ENCODE measurements at regions of chr2 and their contacts with region 1.

Region 1: DNA sequence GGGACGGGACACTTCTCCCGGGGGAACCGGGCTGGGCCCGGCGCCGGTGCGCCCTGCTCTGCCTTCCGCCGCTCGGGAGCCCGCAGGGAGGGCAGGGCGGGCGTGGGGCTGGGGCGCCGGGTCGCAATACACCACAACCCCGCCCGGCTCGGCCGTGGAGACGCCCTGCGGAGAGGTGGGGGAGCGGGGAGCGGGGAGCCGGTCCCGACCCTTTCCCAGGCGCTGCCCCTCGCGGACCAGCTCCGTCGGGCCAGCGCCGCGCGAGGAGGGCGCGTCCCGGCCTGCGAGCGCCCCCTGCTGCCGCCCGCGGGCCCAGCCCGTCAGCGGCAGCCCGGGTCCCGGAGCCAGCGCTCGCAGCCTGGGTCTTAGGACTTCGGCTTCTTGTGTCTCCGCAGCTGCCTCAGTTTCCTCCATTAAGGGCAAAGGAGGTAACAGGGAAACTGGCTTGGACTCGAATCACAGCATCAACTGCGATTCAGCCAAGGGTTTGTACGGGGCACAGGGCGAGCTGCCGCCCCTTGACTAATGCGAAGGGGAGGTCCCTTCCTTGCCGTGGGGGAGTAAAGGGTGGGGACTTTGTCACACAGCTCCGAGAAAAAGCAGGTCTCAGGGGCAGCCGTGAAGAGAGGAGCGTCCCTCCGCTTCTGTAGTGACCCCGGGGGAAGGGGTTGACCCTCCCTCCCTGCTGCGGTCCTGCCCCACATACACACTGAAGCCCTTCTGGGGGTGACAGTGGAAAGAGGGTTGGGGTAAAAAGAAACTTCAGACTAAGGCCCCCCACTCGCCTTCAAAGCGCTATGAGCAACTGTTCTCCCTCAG is 717 bp upstream of the ADRA2B start:
- DNase-seq: peak; percentile 59 to 78 (median 68)
- H3K4me3 ChIP-seq: peak overlapping the region in 1 of 2 donors; percentile 55
- H3K4me3 Mint-ChIP-seq: peak overlapping the region; percentile 35 to 85 (median 55)
- H3K27ac ChIP-seq: no peak overlapping the region
- H3K27ac Mint-ChIP-seq: peak overlapping the region in 2 of 7 donors; percentile 12 to 81
- H3K4me1 ChIP-seq: peaks cover 6% of the 10 kb centered on the region
- H3K4me1 Mint-ChIP-seq: peaks cover 3 to 32% (median 13%) of the 10 kb centered on the region in 4 donors
- H3K27me3 ChIP-seq: no peaks in the 10 kb centered on the region
- H3K27me3 Mint-ChIP-seq: peaks cover 26 to 29% of the 10 kb centered on the region in 2 donors

Region 2: GRCh38 chr2:96024336-96025193 is 92.5 kb before region 1 on chr2:
- CTCF ChIA-PET with region 1: interaction called, 11 read pairs
- POLR2A ChIA-PET with region 1: interaction called, 3 read pairs
- intact Hi-C with region 1: loop called (anchors 10 kb)
- DNase-seq: no peak
- H3K4me3 ChIP-seq: no peak overlapping the region
- H3K4me3 Mint-ChIP-seq: no peak overlapping the region
- H3K27ac ChIP-seq: no peak overlapping the region
- H3K27ac Mint-ChIP-seq: no peak overlapping the region
- H3K4me1 ChIP-seq: no peaks in the 10 kb centered on the region
- H3K4me1 Mint-ChIP-seq: peaks cover 0 to 3% (median 2%) of the 10 kb centered on the region in 4 donors
- H3K27me3 ChIP-seq: no peaks in the 10 kb centered on the region
- H3K27me3 Mint-ChIP-seq: no peaks in the 10 kb centered on the region

Region 3: DNA sequence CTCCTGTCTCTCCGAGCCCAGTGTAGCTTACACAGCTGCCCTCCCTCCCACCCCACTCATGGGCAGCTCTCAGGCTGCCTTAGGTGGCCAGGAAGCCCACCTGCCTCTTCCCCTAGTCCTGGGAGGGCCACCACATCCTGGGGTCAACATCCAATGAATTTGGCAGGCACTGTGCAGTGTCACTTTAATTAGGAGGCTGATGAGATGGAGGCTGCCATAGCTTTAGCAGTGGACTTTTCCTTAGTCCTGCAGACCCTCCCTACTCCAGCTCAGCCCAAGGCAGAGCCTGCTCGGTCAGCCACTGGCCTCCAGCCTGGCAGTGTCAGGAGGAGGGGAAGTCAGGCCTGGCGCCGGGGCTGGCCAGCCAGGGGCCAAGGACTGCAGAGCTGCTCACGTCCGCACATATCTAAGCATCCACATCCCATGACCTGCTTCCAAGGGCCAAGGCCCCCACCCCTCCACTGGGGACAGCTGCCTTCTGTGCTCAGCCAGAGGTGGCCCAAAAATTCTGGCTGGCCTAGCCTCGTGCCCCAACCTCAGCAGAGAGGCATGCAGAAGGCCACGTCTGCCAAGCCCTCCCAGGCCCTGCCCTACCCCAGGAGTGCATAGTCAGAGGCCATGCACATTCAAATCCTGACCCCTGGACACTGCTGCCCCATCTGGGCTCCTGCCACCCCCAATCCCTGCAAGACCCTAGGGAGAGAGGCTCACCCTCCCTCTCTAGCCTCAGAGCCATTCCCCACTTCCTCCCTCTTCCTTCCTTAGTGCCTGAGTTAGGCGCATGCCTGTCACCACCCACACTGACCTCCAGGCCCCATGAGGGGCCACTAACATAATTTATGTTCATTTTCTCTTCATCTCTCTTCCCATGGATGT is 33.8 kb before region 1 on chr2:
- CTCF ChIA-PET with region 1: no interaction called
- POLR2A ChIA-PET with region 1: no interaction called
- intact Hi-C with region 1: no loop called
- DNase-seq: peak in 1 of 5 donors; percentile 25
- H3K4me3 ChIP-seq: no peak overlapping the region
- H3K4me3 Mint-ChIP-seq: no peak overlapping the region
- H3K27ac ChIP-seq: no peak overlapping the region
- H3K27ac Mint-ChIP-seq: peak overlapping the region in 1 of 7 donors; percentile 78
- H3K4me1 ChIP-seq: no peaks in the 10 kb centered on the region
- H3K4me1 Mint-ChIP-seq: no peaks in the 10 kb centered on the region
- H3K27me3 ChIP-seq: no peaks in the 10 kb centered on the region
- H3K27me3 Mint-ChIP-seq: peaks cover 3 to 4% of the 10 kb centered on the region in 2 donors

Measured in CD4-positive, alpha-beta memory T cell (primary cell).